Activated CD4-positive, alpha-beta memory T cell treated with anti-CD3 and anti-CD28 coated beads for 36 hours (primary cell): ENCODE measurements at regions of chr3 and their contacts with region 1.

Region 1: GRCh38 chr3:124639406-124640237 is 90.6 kb upstream of the UMPS start:
- DNase-seq: peak; percentile 12
- H3K4me3 Mint-ChIP-seq: peak overlapping the region; percentile 28
- H3K27ac Mint-ChIP-seq: peak overlapping the region; percentile 67
- H3K4me1 Mint-ChIP-seq: peaks cover 27% of the 10 kb centered on the region
- H3K27me3 Mint-ChIP-seq: peaks cover 5% of the 10 kb centered on the region

Region 2: DNA sequence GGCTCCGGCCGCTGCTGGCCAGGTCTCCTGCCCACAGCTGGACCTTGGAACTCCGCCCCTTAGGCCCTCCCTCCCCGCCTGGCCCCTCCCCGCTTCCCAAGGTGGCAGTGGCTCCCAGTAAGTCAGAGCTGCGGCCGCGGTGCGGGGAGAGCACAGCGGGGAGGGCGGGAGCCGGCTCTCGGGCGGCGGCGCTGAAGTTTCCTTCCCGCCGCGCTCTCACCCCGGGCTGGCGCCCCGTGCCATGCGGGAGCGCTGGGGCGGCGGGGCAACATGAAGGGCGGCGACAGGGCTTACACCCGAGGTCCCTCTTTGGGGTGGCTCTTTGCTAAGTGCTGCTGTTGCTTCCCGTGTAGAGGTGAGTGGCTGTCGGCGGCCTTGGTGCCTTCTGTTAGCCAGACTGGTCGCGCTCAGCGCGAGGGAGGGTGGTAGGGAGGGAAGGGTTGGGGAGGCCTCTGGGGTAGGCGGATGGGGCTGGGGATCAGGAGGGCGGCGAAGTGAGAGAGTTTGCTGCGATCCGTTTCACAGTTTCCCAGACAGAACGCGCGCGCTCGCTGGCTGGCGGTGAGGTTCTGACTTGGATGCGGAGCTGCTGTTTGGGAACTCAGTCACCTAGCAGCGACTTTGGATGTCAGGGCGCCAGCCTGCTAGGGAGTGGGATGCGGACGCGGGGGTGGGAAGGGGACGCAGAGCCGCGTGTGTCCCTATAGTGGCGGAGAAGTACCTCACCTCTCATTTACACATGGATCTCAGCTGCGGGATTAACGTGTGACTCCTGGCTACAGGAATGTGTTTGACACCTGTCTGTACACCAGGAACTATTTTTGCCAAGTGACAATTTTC is 54.9 kb before region 1 on chr3:
- CTCF ChIA-PET with region 1: no interaction called
- POLR2A ChIA-PET with region 1: interaction called, 5 read pairs
- intact Hi-C with region 1: loop called (anchors 2 kb)
- DNase-seq: peak; percentile 54
- H3K4me3 Mint-ChIP-seq: peak overlapping the region; percentile 86
- H3K27ac Mint-ChIP-seq: peak overlapping the region; percentile 47
- H3K4me1 Mint-ChIP-seq: peaks cover 46% of the 10 kb centered on the region
- H3K27me3 Mint-ChIP-seq: peaks cover 15% of the 10 kb centered on the region

Region 3: GRCh38 chr3:124592621-124593441 is 46.8 kb before region 1 on chr3:
- CTCF ChIA-PET with region 1: no interaction called
- POLR2A ChIA-PET with region 1: no interaction called
- intact Hi-C with region 1: loop called (anchors 1 kb)
- DNase-seq: peak; percentile 63
- H3K4me3 Mint-ChIP-seq: no peak overlapping the region
- H3K27ac Mint-ChIP-seq: peak overlapping the region; percentile 60
- H3K4me1 Mint-ChIP-seq: peaks cover 32% of the 10 kb centered on the region
- H3K27me3 Mint-ChIP-seq: no peaks in the 10 kb centered on the region

Region 4: DNA sequence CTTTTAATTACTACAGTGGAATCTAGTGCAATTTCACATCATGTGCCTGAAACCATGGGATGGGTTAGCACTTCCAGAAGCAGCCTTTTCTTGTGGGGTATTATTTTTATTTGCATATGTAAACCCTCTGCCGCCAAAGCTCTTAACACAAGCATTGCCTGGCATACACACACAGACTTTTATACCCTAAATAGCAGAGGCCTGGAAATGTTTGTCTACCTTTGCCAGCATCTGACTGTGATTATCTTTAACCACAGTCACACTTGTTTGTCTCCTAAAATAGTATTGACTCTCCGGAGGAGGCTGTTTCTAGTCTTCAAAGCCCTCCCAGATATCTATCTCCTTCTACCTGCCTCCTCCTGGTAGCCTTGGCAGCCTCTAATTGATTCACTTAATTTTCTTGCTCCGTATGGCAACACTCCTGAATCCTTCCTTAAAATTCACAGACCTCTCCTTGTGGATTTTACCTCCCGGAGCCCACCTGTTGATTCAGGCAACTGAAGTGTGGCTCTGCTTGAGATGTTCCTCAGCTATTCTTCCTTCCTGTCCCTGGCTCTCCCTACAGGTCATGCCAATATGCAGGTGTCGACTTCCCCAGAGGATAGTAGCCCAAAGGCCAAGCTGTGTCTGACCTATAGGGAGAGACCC is 36.5 kb before region 1 on chr3:
- CTCF ChIA-PET with region 1: no interaction called
- POLR2A ChIA-PET with region 1: no interaction called
- intact Hi-C with region 1: no loop called
- DNase-seq: no peak
- H3K4me3 Mint-ChIP-seq: no peak overlapping the region
- H3K27ac Mint-ChIP-seq: no peak overlapping the region
- H3K4me1 Mint-ChIP-seq: no peaks in the 10 kb centered on the region
- H3K27me3 Mint-ChIP-seq: no peaks in the 10 kb centered on the region

Region 5: GRCh38 chr3:124620600-124621063 is 19.0 kb before region 1 on chr3:
- CTCF ChIA-PET with region 1: no interaction called
- POLR2A ChIA-PET with region 1: no interaction called
- intact Hi-C with region 1: loop called (anchors 1 kb)
- DNase-seq: peak; percentile 62
- H3K4me3 Mint-ChIP-seq: peak overlapping the region; percentile 6
- H3K27ac Mint-ChIP-seq: peak overlapping the region; percentile 24
- H3K4me1 Mint-ChIP-seq: peaks cover 34% of the 10 kb centered on the region
- H3K27me3 Mint-ChIP-seq: no peaks in the 10 kb centered on the region

Region 6: GRCh38 chr3:124650798-124651197 is 11.2 kb after region 1 on chr3:
- CTCF ChIA-PET with region 1: no interaction called
- POLR2A ChIA-PET with region 1: interaction called, 4 read pairs
- intact Hi-C with region 1: loop called (anchors 1 kb)
- DNase-seq: peak; percentile 33
- H3K4me3 Mint-ChIP-seq: no peak overlapping the region
- H3K27ac Mint-ChIP-seq: no peak overlapping the region
- H3K4me1 Mint-ChIP-seq: peaks cover 15% of the 10 kb centered on the region
- H3K27me3 Mint-ChIP-seq: no peaks in the 10 kb centered on the region

Region 7: DNA sequence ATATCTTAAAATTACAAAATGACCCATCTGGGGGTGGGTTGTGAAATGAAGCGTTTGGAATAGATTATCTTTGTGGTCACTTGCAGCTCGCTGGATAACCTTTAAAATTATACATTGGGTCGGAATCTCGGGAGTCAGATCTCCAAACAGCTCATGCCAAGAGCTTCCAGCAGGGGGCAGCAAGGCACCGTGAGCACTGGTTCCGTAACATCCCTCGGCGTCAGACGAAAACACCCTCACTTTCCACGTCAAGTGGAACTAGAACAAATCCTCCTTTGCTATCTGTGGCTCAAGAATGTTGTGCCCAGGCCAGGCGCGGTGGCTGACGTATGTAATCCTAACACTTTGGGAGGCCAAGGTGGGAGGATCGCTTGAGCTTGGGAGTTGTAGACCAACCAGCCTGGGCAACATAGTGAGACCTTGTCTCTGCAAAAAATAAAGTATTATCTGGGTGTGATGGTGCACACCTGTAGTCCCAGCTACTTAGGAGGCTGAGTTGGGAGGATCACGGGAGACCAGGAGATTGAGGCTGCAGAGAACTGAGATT is 121.7 kb after region 1 on chr3:
- CTCF ChIA-PET with region 1: no interaction called
- POLR2A ChIA-PET with region 1: no interaction called
- intact Hi-C with region 1: no loop called
- DNase-seq: peak; percentile 83
- H3K4me3 Mint-ChIP-seq: peak overlapping the region; percentile 28
- H3K27ac Mint-ChIP-seq: no peak overlapping the region
- H3K4me1 Mint-ChIP-seq: peaks cover 3% of the 10 kb centered on the region
- H3K27me3 Mint-ChIP-seq: no peaks in the 10 kb centered on the region